Panc1 (cell line): ENCODE measurements at regions of chr2 and their contacts with region 1.

Region 1: DNA sequence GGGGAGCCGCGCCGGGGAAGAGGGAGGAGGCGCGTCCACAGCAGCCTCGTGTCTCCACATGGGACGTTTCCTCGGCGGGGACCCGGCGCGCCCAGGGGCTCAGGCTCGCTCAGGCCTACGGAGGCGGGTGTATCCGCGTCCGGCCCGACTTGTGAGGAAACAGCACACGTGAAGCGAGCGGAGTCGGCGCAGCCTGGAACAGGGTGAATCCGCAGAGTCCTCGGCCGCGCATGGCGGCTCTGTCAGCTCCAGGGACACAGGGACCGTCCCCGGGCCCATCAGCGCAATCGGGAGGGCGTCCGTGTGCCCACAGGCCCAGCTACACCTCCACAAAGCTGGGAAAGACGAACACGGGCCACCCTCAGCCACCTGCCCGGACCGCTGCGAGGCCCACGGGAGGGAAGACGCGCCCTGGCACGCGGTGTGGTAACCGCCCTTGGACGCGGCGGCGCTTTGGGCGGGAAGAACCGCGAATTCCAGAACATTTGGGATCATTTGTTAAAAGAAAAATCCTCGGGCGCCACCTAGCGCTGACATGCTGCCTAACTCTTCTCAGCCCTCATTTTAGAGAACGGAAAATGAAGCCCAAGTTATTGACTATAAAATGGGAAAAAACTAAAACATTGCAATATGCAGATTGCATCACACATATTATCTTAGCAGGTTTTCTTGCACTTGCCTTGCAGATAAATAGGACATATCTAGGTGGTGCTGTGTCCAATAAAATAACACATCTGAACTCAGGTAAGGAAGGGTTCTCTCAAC is 40.4 kb downstream of the TMEM18 start:
- DNase-seq: no peak
- ATAC-seq: peak; percentile 85
- H3K4me3 ChIP-seq: no peak overlapping the region
- H3K27ac ChIP-seq: no peak overlapping the region
- H3K4me1 ChIP-seq: no peaks in the 10 kb centered on the region
- H3K27me3 ChIP-seq: no peaks in the 10 kb centered on the region
- CTCF ChIP-seq: peak; percentile 92

Region 2: DNA sequence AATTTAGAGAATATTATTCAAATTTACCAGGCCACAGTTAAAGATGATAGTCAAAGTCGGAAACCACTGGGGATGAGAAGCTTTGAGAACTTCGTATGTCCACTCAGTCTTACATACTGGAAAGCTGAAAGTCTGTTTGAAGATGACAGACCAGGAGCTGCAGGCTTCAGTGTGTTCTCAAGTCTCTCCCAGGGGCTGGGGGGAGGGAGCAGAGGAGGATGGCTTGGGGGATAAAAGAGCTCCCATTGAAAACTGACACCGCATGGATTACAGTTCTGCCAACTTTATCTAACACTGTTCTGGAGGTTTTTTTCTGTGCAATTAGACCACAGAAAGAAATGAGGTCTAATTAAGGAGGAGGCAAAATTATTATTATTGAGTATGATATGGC is 178.4 kb before region 1 on chr2:
- CTCF ChIA-PET with region 1: interaction called, 11 read pairs
- POLR2A ChIA-PET with region 1: no interaction called
- in situ Hi-C with region 1: no loop called
- intact Hi-C with region 1: no loop called
- DNase-seq: no peak
- ATAC-seq: no peak
- H3K4me3 ChIP-seq: no peak overlapping the region
- H3K27ac ChIP-seq: no peak overlapping the region
- H3K4me1 ChIP-seq: no peaks in the 10 kb centered on the region
- H3K27me3 ChIP-seq: peaks cover 18% of the 10 kb centered on the region
- CTCF ChIP-seq: no peak

Region 3: GRCh38 chr2:529425-529824 is 107.4 kb before region 1 on chr2:
- CTCF ChIA-PET with region 1: no interaction called
- POLR2A ChIA-PET with region 1: no interaction called
- in situ Hi-C with region 1: no loop called
- intact Hi-C with region 1: loop called (anchors 1 kb)
- DNase-seq: peak; percentile 5
- ATAC-seq: peak; percentile 78; the same call in 1 of the 2 replicates
- H3K4me3 ChIP-seq: no peak overlapping the region
- H3K27ac ChIP-seq: no peak overlapping the region
- H3K4me1 ChIP-seq: peaks cover 3% of the 10 kb centered on the region; the same call in 1 of the 2 replicates
- H3K27me3 ChIP-seq: no peaks in the 10 kb centered on the region
- CTCF ChIP-seq: peak; percentile 67